ENCODE measurements at regions of chr11 and their contacts with region 1.

Region 1: GRCh38 chr11:12914400-12914912 is 94.7 kb upstream of the RASSF10 start:
- DNase-seq: peak; percentile 64 to 77
- H3K4me3 ChIP-seq: no peak overlapping the region
- H3K4me1 ChIP-seq: peaks cover 8% of the 10 kb centered on the region
- H3K27me3 ChIP-seq: no peaks in the 10 kb centered on the region

Region 2: DNA sequence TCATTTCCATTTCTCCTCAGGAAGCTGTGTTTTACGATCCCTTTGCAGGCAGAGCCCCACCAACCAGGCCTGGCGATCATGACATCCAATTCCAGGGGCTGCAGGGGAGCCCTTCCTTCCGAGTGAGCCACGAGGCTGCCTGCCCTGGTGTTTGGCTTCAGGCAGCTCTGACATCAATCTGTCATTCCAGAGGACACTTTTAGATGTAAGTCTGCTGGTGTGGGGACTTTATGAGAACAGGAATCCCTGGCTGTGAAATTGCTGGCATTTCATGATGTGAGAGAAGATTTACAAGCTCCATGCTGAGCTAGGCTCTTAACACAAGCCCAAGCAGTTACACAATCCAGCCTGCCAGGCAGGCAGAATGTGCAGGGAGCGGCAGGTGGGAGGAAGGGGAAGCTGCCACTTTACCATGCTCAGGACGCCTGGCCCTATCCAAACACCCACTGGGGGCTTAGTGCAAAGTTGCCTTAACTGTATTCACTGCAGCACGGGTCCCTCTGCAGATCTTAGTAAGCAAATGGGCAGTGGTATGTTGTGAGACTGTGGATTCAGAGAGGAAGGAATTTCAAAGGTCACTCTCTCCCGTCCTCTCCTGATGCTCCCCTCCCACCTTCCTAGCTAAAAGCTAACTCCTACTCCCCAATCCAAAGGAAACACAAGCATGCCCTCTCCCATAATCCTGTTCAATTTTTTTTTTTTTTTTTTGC is 847.5 kb before region 1 on chr11:
- in situ Hi-C with region 1: loop called (anchors 25 kb)
- DNase-seq: no peak
- H3K4me3 ChIP-seq: no peak overlapping the region
- H3K4me1 ChIP-seq: no peaks in the 10 kb centered on the region
- H3K27me3 ChIP-seq: no peaks in the 10 kb centered on the region; the same call in 1 of the 2 replicates

Region 3: GRCh38 chr11:12717851-12718291 is 196.6 kb before region 1 on chr11:
- in situ Hi-C with region 1: no loop called
- DNase-seq: no peak
- H3K4me3 ChIP-seq: no peak overlapping the region
- H3K4me1 ChIP-seq: peaks cover 2% of the 10 kb centered on the region
- H3K27me3 ChIP-seq: no peaks in the 10 kb centered on the region

Region 4: DNA sequence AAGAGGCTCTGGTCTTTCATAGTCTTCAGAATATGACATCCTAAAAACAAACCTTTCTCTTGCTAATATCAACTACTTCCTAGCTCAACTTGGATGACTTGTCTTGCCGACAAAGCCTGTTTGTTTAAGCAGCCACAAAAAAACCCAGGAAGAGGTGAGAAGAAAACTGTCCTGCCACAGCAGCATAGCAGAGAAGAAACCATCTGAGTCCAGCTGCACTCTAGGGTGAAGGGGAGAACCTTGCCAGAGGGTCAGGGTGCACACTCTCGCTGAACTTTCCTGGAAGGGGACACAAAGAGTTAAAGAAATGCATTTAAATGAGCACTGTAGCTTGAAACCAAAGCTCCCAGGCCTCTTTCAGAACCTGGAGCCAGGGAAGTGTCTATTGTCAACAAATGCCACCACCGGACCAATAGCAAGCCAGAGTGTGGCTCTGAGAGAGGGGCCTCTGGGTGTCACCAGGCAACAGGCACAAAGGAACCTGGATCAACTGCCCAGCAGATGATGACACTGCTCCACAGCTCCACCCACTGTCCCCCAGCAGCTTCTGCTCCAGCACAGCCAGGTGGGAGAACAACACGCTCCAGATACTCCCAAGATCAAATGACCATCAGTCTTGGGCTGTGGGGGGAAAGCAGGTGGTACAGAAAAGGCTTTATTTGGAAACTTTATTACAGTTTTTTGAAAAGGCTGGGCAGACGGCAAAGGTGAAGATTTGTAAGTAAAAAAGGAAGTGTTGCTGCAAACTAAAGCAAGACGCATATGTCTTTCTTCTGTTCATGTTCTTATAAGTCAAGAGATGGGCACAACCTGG is 200.3 kb after region 1 on chr11:
- in situ Hi-C with region 1: no loop called
- DNase-seq: peak; percentile 54 to 67
- H3K4me3 ChIP-seq: no peak overlapping the region
- H3K4me1 ChIP-seq: no peaks in the 10 kb centered on the region
- H3K27me3 ChIP-seq: no peaks in the 10 kb centered on the region

Region 5: GRCh38 chr11:13423372-13423771 is 508.9 kb after region 1 on chr11:
- in situ Hi-C with region 1: no loop called
- DNase-seq: no peak
- H3K4me3 ChIP-seq: no peak overlapping the region
- H3K4me1 ChIP-seq: no peaks in the 10 kb centered on the region
- H3K27me3 ChIP-seq: no peaks in the 10 kb centered on the region

Measured in HAP-1 (cell line).